ENCODE measurements at regions of chr1 and their contacts with region 1.

Region 1: GRCh38 chr1:21368515-21369289 is 71.2 kb upstream of the NBPF3 start:
- DNase-seq: peak; percentile 77 to 84
- H3K4me3 ChIP-seq: no peak overlapping the region
- H3K4me3 Mint-ChIP-seq: peak overlapping the region; percentile 15
- H3K27ac Mint-ChIP-seq: peak overlapping the region; percentile 29
- H3K4me1 ChIP-seq: peaks cover 5% of the 10 kb centered on the region; the same call in 1 of the 2 replicates
- H3K4me1 Mint-ChIP-seq: no peaks in the 10 kb centered on the region
- H3K27me3 ChIP-seq: no peaks in the 10 kb centered on the region
- H3K27me3 Mint-ChIP-seq: no peaks in the 10 kb centered on the region
- CTCF ChIP-seq: peak; percentile 95 to 98

Region 2: DNA sequence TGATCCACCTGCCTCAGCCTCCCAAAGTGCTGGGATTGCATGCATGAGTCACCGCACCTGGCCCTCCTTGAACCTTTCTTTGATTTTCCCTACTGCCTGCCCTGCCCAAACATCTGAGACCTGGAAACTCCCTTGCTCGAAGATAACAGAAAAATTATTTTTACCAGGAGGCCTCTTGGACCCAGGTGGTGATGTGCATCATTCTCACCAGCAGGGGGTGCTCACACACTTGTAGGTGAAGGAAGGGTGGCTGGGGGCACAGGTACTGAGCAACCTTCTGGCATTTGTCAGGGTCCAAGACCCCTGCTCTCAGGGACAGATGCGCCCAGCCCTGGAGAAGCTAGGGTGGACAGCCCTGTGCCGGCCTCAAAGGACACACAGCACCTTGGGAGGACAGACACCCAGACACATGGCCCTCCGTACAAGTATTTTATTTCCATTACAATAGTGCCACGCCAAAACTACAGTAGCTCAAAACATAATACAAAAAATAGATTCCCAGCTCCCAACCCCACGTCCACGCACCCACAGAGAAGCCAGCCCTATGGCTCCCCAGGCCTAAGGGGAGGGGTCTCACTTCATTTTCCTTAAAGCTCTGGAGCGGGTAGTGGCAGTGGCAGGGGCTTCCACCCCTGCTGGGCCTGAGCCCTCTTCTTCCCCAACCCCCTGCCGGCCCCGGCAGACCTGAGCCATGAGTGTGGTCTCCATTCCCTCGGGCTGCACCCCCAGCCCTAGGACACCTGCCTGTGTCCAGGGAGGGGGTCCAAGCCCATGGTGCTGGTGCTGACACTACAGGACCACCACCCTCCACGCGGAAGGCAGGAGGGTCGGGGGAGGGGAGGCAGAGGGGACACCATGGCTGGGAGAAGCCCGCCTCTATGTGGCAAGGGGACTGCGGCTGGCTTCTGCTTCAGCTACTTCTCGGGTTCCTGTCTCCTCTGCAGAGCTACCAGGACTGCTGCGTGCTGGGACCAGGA is 151.6 kb before region 1 on chr1:
- CTCF ChIA-PET with region 1: interaction called, 7 read pairs
- POLR2A ChIA-PET with region 1: no interaction called
- intact Hi-C with region 1: loop called (anchors 5 kb)
- DNase-seq: peak; percentile 59 to 62
- H3K4me3 ChIP-seq: no peak overlapping the region
- H3K4me3 Mint-ChIP-seq: no peak overlapping the region
- H3K27ac Mint-ChIP-seq: no peak overlapping the region
- H3K4me1 ChIP-seq: no peaks in the 10 kb centered on the region
- H3K4me1 Mint-ChIP-seq: peaks cover 6% of the 10 kb centered on the region
- H3K27me3 ChIP-seq: no peaks in the 10 kb centered on the region
- H3K27me3 Mint-ChIP-seq: no peaks in the 10 kb centered on the region
- CTCF ChIP-seq: peak; percentile 68 to 71

Region 3: DNA sequence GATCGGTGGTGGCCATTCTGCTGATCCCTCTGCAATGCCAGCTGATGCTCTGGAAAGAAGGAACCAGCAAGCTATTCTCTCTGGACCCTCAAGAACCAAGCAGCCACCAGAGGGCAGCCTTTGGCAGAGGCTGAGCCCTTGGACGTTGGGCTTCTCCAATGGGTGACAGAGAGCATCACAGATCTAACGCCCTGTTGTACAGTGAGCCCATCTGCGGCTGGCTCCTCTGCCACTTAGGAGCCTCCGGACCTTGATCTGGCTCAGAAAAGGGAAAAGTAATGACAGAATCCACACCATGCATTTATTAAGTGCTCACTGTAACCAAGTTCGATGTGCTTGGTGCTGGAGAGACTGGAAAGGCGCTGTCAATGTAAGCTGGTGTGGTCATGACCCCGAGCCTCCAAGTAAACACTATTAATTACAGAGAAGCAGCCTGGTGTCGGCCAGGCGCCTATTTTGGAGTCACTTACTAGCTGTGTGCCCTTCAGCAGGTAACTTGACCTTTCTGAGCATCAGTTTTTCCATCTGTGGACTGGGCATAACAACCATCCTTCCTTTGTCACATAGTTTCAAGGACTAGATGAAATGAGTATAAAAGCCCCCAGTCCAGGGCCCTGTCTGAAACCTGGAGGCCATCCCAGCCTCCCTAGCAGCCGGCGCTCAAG is 113.3 kb before region 1 on chr1:
- CTCF ChIA-PET with region 1: interaction called, 49 read pairs
- POLR2A ChIA-PET with region 1: no interaction called
- intact Hi-C with region 1: loop called (anchors 1 kb)
- DNase-seq: peak; percentile 83 to 89
- H3K4me3 ChIP-seq: no peak overlapping the region
- H3K4me3 Mint-ChIP-seq: no peak overlapping the region
- H3K27ac Mint-ChIP-seq: no peak overlapping the region
- H3K4me1 ChIP-seq: peaks cover 25% of the 10 kb centered on the region
- H3K4me1 Mint-ChIP-seq: peaks cover 13% of the 10 kb centered on the region
- H3K27me3 ChIP-seq: no peaks in the 10 kb centered on the region
- H3K27me3 Mint-ChIP-seq: no peaks in the 10 kb centered on the region
- CTCF ChIP-seq: peak; percentile 61 to 83

Region 4: GRCh38 chr1:21302747-21303715 is 65.7 kb before region 1 on chr1:
- CTCF ChIA-PET with region 1: interaction called, 11 read pairs
- POLR2A ChIA-PET with region 1: no interaction called
- intact Hi-C with region 1: no loop called
- DNase-seq: no peak
- H3K4me3 ChIP-seq: no peak overlapping the region
- H3K4me3 Mint-ChIP-seq: no peak overlapping the region
- H3K27ac Mint-ChIP-seq: no peak overlapping the region
- H3K4me1 ChIP-seq: no peaks in the 10 kb centered on the region
- H3K4me1 Mint-ChIP-seq: no peaks in the 10 kb centered on the region
- H3K27me3 ChIP-seq: no peaks in the 10 kb centered on the region
- H3K27me3 Mint-ChIP-seq: no peaks in the 10 kb centered on the region
- CTCF ChIP-seq: peak in 1 of 2 experiments; percentile 25

Region 5: DNA sequence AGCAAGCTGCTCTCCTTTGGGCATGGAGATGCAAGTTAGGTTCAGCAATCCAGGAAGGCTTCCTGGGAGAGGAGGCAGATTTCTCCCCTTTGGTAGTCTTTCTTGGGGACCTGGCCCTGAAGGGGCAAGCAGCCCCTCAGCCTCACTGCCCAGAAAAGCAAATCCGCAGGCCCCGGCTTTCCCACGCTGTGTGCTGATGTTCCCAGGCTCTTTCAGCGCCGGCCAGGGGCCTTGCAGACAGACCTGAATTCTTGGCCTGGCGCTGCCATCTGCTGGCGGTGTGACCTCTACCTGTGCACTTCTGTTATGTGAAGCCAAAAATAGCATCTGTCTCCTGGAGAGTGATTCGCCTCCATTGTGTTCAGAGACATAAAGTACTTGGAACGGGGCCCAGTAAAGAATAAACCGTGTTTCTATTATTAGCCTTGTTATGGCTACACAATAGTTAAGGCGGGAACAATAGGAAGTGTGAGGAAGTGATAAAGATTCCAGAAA is 205.3 kb after region 1 on chr1:
- CTCF ChIA-PET with region 1: interaction called, 6 read pairs
- POLR2A ChIA-PET with region 1: no interaction called
- intact Hi-C with region 1: loop called (anchors 1 kb)
- DNase-seq: peak; percentile 71
- H3K4me3 ChIP-seq: no peak overlapping the region
- H3K4me3 Mint-ChIP-seq: no peak overlapping the region
- H3K27ac Mint-ChIP-seq: no peak overlapping the region
- H3K4me1 ChIP-seq: no peaks in the 10 kb centered on the region
- H3K4me1 Mint-ChIP-seq: no peaks in the 10 kb centered on the region
- H3K27me3 ChIP-seq: no peaks in the 10 kb centered on the region
- H3K27me3 Mint-ChIP-seq: no peaks in the 10 kb centered on the region
- CTCF ChIP-seq: peak; percentile 50 to 67

Measured in Caco-2 (cell line).